Posterior vena cava (tissue), 2 donors: ENCODE measurements at regions of chr3 and their contacts with region 1.

Region 1: DNA sequence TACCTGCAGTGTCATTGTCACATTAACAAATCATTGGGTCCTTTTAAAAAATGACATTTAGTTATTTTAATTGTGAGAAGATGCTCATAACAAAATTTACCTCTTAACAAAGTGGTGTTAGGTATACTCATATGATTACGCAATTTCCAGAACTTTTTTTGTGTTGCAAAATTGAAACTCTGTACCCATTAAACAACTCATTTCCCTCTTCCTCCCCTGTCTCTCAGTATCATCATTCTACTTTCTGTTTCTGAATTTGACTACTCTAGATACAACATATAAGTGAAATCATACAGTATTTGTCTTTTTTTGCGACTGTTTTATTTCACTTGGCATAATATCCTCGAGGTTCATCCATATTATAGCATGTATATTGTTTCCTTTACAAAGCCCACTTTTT is 58.7 kb upstream of the CHST2 start:
- DNase-seq: no peak

Region 2: GRCh38 chr3:143001369-143002082 is 59.4 kb before region 1 on chr3 and contains the start of gene U2SURP:
- intact Hi-C with region 1: no loop called
- DNase-seq: peak; percentile 99
- total RNA-seq, gene U2SURP: 68.1 to 72.5 TPM

Region 3: DNA sequence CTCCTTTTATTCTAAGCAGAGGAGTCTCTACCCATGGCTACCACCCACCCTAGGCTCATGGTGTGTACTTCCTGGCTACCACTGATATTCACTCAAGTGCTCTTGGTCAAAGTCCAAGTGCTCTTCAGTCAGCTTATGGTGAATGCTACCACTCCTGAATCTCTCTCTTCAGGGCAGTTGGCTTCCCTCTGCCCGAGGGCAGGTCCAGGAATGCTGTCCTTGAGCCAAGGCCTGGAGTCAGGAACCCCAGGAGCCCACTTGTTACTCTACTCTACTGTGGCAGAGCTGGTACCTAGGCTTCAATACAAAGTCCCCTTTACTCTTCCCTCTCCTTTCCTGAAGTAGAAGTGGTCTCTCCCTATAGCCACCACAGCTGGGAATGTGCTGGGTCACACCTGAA is 1136.7 kb after region 1 on chr3:
- intact Hi-C with region 1: loop called in 1 of 2 experiments (anchors 10 kb)
- DNase-seq: no peak